Activated B cell treated with CpG ODN at 0.5 μM for 24 hours (primary cell): ENCODE measurements at regions of chr12 and their contacts with region 1.

Region 1: GRCh38 chr12:112341046-112341825 is 41.0 kb downstream of the HECTD4 start:
- DNase-seq: no peak
- ATAC-seq: no peak
- H3K4me3 Mint-ChIP-seq: no peak overlapping the region
- H3K27ac Mint-ChIP-seq: no peak overlapping the region
- H3K4me1 Mint-ChIP-seq: peaks cover 48% of the 10 kb centered on the region
- H3K27me3 Mint-ChIP-seq: no peaks in the 10 kb centered on the region
- CTCF ChIP-seq: no peak

Region 2: GRCh38 chr12:112309828-112310227 is 31.4 kb before region 1 on chr12:
- CTCF ChIA-PET with region 1: no interaction called
- POLR2A ChIA-PET with region 1: no interaction called
- intact Hi-C with region 1: loop called (anchors 5 kb)
- DNase-seq: no peak
- ATAC-seq: no peak
- H3K4me3 Mint-ChIP-seq: no peak overlapping the region
- H3K27ac Mint-ChIP-seq: no peak overlapping the region
- H3K4me1 Mint-ChIP-seq: peaks cover 7% of the 10 kb centered on the region
- H3K27me3 Mint-ChIP-seq: no peaks in the 10 kb centered on the region
- CTCF ChIP-seq: no peak

Region 3: GRCh38 chr12:113161414-113162016 is 820.3 kb after region 1 on chr12:
- CTCF ChIA-PET with region 1: no interaction called
- POLR2A ChIA-PET with region 1: no interaction called
- intact Hi-C with region 1: no loop called
- DNase-seq: no peak
- ATAC-seq: peak; percentile 84
- H3K4me3 Mint-ChIP-seq: no peak overlapping the region
- H3K27ac Mint-ChIP-seq: peak overlapping the region; percentile 35
- H3K4me1 Mint-ChIP-seq: no peaks in the 10 kb centered on the region
- H3K27me3 Mint-ChIP-seq: no peaks in the 10 kb centered on the region
- CTCF ChIP-seq: no peak